ENCODE measurements at regions of chr14 and their contacts with region 1.

Region 1: GRCh38 chr14:68843471-68844209 is 50.8 kb upstream of the ZFP36L1 start:
- DNase-seq: no peak
- H3K4me3 ChIP-seq: no peak overlapping the region
- H3K27me3 ChIP-seq: no peaks in the 10 kb centered on the region
- CTCF ChIP-seq: peak; percentile 94

Region 2: GRCh38 chr14:67883717-67884116 is 959.9 kb before region 1 on chr14:
- CTCF ChIA-PET with region 1: interaction called, 31 read pairs
- POLR2A ChIA-PET with region 1: interaction called, 3 read pairs
- DNase-seq: no peak
- H3K4me3 ChIP-seq: no peak overlapping the region
- H3K27me3 ChIP-seq: no peaks in the 10 kb centered on the region
- CTCF ChIP-seq: peak; percentile 13; the same call in 1 of the 2 replicates

Region 3: GRCh38 chr14:67934008-67934481 is 909.6 kb before region 1 on chr14:
- CTCF ChIA-PET with region 1: interaction called, 13 read pairs
- POLR2A ChIA-PET with region 1: no interaction called
- DNase-seq: no peak
- H3K4me3 ChIP-seq: no peak overlapping the region
- H3K27me3 ChIP-seq: no peaks in the 10 kb centered on the region
- CTCF ChIP-seq: peak; percentile 65

Region 4: DNA sequence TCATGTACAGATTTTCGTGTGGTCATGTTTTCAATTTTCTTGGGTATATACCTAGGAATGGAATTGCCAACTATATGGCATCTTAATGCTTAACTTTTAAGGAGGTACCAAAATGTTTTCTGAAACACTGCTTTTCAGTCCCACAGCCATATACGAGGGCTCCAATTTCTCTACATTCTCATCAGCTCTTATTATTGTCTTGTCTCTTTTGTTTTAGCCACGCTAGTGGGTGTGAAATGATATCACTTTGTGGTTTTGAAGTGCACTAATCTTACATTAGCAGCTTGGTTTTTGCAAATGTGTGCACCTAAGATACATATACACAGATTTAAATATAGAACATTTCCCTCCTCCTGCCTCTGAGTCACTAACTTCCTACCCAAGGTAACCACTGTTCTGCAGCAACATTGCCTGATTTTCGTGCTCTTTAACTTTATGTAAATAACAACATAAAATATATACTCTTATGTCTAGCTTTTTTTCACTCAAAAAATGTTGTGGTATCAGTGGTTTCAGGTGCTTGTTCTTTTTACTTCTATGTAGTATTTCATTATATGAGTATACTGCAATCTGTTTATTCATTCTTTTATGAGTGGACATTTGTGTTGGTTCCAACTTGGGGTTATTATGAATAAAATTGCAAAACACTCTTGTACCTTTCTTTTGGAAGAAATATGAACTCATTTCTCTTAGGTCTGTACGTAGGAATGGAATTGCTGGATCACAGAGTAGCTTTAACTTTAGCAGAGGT is 123.8 kb before region 1 on chr14:
- CTCF ChIA-PET with region 1: no interaction called
- POLR2A ChIA-PET with region 1: no interaction called
- DNase-seq: no peak
- H3K4me3 ChIP-seq: no peak overlapping the region
- H3K27me3 ChIP-seq: no peaks in the 10 kb centered on the region
- CTCF ChIP-seq: no peak

Region 5: DNA sequence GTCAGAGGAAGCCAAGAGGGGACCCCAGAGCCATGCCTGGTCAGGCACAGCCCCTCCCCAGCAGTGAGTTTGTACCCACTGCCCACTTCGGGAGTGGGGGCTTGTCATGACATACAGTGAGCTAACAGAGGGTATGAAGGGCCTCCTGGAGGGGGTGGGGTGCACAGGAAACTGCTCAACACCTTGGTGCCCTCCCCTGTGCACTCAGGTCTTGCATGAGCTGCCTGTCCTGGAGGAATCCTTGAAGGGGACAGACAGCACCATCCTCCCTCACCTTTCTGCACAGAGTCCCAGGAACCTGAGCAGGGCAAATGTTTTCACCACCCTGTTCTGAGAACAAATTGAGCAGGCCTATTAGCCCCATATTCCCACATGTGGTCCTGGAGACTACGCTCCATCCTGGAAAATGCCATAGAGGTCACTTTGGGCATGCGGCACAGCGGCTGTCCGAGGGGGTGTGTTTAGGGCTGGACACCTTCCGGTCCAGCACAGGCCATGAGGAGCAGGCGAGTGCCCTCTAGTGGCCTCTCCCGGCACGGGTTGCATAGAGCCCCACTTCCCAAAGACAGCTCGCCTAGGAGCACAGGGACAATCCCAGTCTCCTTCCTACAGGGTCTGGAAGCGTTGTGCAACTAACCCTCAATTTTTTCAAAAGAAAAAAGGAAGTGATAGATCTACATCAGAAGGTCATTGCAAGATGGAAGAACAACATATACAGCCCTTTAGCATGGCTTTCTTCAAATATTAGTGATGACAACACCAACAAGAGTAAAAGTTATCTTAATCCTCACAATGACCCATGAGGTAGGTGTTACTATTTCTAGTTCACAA is 18.9 kb before region 1 on chr14:
- CTCF ChIA-PET with region 1: interaction called, 37 read pairs
- POLR2A ChIA-PET with region 1: no interaction called
- DNase-seq: no peak
- H3K4me3 ChIP-seq: no peak overlapping the region
- H3K27me3 ChIP-seq: no peaks in the 10 kb centered on the region
- CTCF ChIP-seq: peak; percentile 94

Region 6: GRCh38 chr14:68854421-68854820 is 10.8 kb after region 1 on chr14:
- CTCF ChIA-PET with region 1: interaction called, 10 read pairs
- POLR2A ChIA-PET with region 1: no interaction called
- DNase-seq: no peak
- H3K4me3 ChIP-seq: no peak overlapping the region
- H3K27me3 ChIP-seq: no peaks in the 10 kb centered on the region
- CTCF ChIP-seq: no peak